MCF 10A (cell line): ENCODE measurements at regions of chr10 and their contacts with region 1.

Region 1: DNA sequence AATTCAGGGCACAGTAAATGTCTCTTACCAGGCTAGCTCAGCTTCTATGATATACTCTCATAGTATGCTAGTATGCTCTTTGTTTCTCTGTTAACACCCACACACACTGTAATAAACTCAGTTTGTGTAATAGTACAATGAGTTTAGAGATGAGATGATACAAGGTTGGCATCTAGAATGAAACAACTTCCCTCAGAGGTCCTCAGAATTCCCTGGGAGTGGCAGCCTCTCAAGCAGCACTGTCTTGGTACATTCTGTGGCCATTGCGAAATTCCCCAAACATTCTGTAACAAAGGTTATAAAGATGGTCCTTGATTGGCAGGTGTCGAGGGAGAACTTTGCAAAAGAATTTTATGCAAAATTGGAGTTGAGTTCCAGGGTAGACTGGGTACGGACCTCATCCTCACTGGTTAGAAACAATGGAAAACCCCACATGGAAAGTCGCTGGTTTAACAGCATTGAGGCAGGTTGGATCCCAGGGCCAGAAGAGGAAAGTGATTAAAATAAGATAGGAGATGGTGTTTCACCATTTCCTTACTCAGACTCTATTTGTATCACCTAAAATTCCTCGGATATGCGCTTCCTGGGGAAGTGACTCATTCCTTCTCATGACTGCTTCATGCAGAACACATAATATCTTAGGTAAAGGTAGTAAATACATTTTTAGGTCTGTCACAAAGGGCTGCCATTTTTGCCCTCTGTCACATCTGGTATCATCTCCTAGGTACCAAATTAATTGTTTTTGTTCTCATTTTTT is 657.8 kb downstream of the SORCS1 start:
- DNase-seq: peak; percentile 93
- H3K4me3 Mint-ChIP-seq: peak overlapping the region; percentile 21
- H3K27ac Mint-ChIP-seq: peak overlapping the region; percentile 86
- H3K4me1 Mint-ChIP-seq: peaks cover 48% of the 10 kb centered on the region
- H3K27me3 Mint-ChIP-seq: no peaks in the 10 kb centered on the region
- CTCF ChIP-seq: no peak

Region 2: DNA sequence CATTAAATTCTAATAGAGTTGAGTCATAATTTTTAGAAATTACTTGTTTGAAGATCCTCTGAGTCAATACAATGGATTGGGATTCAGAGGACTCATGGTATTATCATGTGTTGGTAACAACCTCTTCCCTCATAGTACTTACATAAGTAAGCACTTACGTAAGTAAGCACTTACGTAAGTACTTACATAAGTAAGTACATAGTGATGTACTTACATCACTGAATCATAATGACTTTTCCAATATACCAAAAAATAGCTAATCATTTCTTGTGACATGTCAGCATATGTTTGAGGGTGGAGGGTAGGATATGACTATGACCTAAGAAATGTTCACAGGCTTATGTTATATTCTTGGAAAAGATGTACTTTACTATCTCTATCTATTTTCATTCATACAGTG is 82.6 kb before region 1 on chr10:
- CTCF ChIA-PET with region 1: no interaction called
- POLR2A ChIA-PET with region 1: no interaction called
- intact Hi-C with region 1: loop called (anchors 5 kb)
- DNase-seq: peak; percentile 81
- H3K4me3 Mint-ChIP-seq: no peak overlapping the region
- H3K27ac Mint-ChIP-seq: peak overlapping the region; percentile 0
- H3K4me1 Mint-ChIP-seq: peaks cover 19% of the 10 kb centered on the region
- H3K27me3 Mint-ChIP-seq: no peaks in the 10 kb centered on the region
- CTCF ChIP-seq: no peak

Region 3: GRCh38 chr10:106557951-106558733 is 51.5 kb after region 1 on chr10:
- CTCF ChIA-PET with region 1: no interaction called
- POLR2A ChIA-PET with region 1: interaction called, 3 read pairs
- intact Hi-C with region 1: loop called (anchors 2 kb)
- DNase-seq: peak; percentile 74
- H3K4me3 Mint-ChIP-seq: no peak overlapping the region
- H3K27ac Mint-ChIP-seq: peak overlapping the region; percentile 15
- H3K4me1 Mint-ChIP-seq: peaks cover 39% of the 10 kb centered on the region
- H3K27me3 Mint-ChIP-seq: no peaks in the 10 kb centered on the region
- CTCF ChIP-seq: no peak

Region 4: DNA sequence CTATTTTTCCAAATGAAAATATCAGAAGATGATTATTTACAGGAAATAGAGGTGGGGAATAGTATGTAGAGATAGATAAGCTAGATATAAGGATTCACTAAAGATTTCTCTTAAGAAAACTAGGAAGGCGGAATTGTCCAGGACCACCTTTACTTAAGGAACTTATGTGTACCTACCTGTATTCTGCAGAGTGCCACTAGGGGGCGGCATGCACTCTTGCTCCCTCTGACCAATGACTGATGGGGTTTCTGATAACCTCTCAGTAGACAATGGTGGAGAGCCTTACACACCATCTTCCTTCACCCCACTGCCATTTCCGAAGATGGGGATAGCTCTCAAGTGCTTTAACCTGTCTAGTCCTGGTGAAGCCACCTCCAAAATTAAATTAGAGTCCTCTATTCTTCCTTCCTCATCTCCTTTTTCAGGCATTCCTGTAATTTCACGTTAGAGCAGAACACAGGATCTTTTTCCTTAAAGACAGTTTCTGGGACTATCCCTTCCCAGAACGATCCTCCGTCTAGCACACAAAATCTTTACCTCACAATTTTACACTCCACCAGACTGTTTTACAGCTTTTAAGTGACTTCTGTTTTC is 204.7 kb after region 1 on chr10:
- CTCF ChIA-PET with region 1: no interaction called
- POLR2A ChIA-PET with region 1: no interaction called
- intact Hi-C with region 1: no loop called
- DNase-seq: peak; percentile 56
- H3K4me3 Mint-ChIP-seq: no peak overlapping the region
- H3K27ac Mint-ChIP-seq: no peak overlapping the region
- H3K4me1 Mint-ChIP-seq: peaks cover under 1% of the 10 kb centered on the region
- H3K27me3 Mint-ChIP-seq: no peaks in the 10 kb centered on the region
- CTCF ChIP-seq: peak; percentile 89